ENCODE measurements at regions of chr22 and their contacts with region 1.

Region 1: GRCh38 chr22:36856121-36856791 is 4.5 kb upstream of the NCF4 start:
- DNase-seq: peak; percentile 57 to 79
- ATAC-seq: peak; percentile 91 to 96
- H3K4me3 ChIP-seq: peak overlapping the region; percentile 8; the same call in 1 of the 3 replicates
- H3K27ac ChIP-seq: no peak overlapping the region
- H3K4me1 ChIP-seq: no peaks in the 10 kb centered on the region
- CTCF ChIP-seq: peak; percentile 99
- EP300 ChIP-seq: no peak
- POLR2A ChIP-seq: no peak
- RAD21 ChIP-seq: peak; percentile 68 to 80

Region 2: GRCh38 chr22:36552289-36552688 is 304.0 kb before region 1 on chr22:
- CTCF ChIA-PET with region 1: interaction called, 23 read pairs
- POLR2A ChIA-PET with region 1: no interaction called
- DNase-seq: no peak
- ATAC-seq: no peak
- H3K4me3 ChIP-seq: no peak overlapping the region
- H3K27ac ChIP-seq: no peak overlapping the region
- H3K4me1 ChIP-seq: peaks cover 5% of the 10 kb centered on the region
- CTCF ChIP-seq: no peak
- EP300 ChIP-seq: no peak
- POLR2A ChIP-seq: no peak
- RAD21 ChIP-seq: no peak

Region 3: GRCh38 chr22:36699915-36700314 is 156.3 kb before region 1 on chr22:
- CTCF ChIA-PET with region 1: no interaction called
- POLR2A ChIA-PET with region 1: no interaction called
- DNase-seq: no peak
- ATAC-seq: no peak
- H3K4me3 ChIP-seq: no peak overlapping the region
- H3K27ac ChIP-seq: no peak overlapping the region
- H3K4me1 ChIP-seq: no peaks in the 10 kb centered on the region
- CTCF ChIP-seq: no peak
- EP300 ChIP-seq: no peak
- POLR2A ChIP-seq: no peak
- RAD21 ChIP-seq: no peak

Region 4: DNA sequence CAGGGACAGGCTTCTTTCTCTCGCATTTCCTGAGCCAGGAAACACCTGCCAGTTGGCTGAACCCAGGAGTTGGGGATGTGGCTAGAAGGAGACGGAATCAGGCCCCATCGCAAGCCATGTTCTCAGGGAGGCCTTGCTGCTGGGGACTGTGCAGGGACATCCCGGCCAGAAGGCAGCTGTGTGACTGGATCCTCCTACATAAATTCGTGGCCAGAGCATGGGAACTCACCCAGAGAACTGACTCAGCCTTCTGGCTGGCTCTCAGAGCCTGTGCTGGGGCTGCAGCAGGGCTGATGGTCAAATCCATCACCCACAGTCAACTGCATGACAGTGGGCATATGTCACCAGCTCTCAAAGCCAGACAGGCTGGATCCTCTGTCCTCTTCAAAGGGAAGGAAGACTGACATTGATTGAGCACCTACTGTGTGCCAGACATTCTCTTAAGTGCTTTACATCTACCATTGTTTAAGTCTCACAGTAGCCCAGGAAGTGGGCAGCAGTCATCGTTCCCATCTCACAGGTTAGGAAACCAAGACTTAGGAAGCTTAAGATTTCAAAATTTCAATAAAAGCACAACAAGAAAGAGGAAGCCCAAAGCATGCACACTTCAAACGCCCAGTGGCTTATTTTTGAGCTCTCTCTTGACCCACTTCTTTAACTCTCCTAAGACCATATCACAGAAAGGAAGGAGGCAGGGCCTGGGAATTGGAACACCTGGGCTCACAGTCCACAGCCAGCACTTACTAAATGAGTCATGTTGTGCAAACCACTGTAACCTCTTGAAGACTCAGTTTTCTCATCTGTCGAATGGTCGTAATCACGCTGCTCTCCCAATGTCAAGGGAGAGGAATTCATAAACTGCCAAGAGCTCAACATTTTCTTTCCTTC is 121.8 kb before region 1 on chr22:
- CTCF ChIA-PET with region 1: no interaction called
- POLR2A ChIA-PET with region 1: no interaction called
- DNase-seq: no peak
- ATAC-seq: no peak
- H3K4me3 ChIP-seq: no peak overlapping the region
- H3K27ac ChIP-seq: no peak overlapping the region
- H3K4me1 ChIP-seq: no peaks in the 10 kb centered on the region
- CTCF ChIP-seq: no peak
- EP300 ChIP-seq: no peak
- POLR2A ChIP-seq: no peak
- RAD21 ChIP-seq: no peak

Region 5: GRCh38 chr22:36787204-36787988 is 68.9 kb before region 1 on chr22:
- CTCF ChIA-PET with region 1: interaction called, 35 read pairs
- POLR2A ChIA-PET with region 1: no interaction called
- DNase-seq: no peak
- ATAC-seq: peak in 1 of 2 experiments; percentile 27; a peak in 1 of 6 replicates
- H3K4me3 ChIP-seq: no peak overlapping the region
- H3K27ac ChIP-seq: no peak overlapping the region
- H3K4me1 ChIP-seq: 0 out of 3 replicates have a peak, but pooled peaks cover 6% of the 10 kb centered on the region
- CTCF ChIP-seq: no peak
- EP300 ChIP-seq: no peak
- POLR2A ChIP-seq: no peak
- RAD21 ChIP-seq: no peak

Region 6: DNA sequence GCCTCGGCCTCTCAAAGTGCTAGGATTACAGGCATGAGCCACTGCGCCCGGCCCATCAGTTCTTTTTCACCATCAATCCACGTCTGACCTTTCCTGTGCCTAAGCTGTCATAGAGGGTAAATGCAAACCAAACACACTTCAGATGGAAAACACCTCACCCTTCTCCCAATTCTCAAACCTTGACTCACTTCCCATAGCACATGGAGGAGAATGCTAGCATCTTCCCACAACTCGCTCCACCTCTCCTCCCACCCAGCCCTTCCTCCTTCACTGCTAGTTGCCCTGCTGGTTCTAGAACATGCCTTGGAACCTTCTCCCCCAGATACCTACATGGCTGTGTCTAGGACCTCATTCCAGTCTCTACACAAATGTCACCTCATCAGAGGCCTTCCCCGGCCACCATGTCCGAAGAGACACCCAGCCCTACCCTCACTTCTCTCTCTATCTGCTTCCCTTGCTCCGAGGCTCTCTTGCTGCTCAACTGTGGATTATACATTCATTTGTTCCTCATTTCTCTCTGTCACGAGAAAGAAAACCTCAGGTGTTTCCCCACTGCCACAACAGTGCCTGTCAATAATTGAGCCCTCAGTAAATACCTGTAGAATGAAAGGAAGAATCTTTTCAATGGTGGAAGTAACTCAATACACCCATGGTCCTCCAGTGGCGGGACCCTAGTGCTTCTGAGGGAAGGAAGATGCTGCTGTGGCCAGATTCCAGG is 16.7 kb before region 1 on chr22:
- CTCF ChIA-PET with region 1: interaction called, 13 read pairs
- POLR2A ChIA-PET with region 1: no interaction called
- DNase-seq: no peak
- ATAC-seq: no peak
- H3K4me3 ChIP-seq: no peak overlapping the region
- H3K27ac ChIP-seq: no peak overlapping the region
- H3K4me1 ChIP-seq: no peaks in the 10 kb centered on the region
- CTCF ChIP-seq: no peak
- EP300 ChIP-seq: no peak
- POLR2A ChIP-seq: no peak
- RAD21 ChIP-seq: no peak

Region 7: DNA sequence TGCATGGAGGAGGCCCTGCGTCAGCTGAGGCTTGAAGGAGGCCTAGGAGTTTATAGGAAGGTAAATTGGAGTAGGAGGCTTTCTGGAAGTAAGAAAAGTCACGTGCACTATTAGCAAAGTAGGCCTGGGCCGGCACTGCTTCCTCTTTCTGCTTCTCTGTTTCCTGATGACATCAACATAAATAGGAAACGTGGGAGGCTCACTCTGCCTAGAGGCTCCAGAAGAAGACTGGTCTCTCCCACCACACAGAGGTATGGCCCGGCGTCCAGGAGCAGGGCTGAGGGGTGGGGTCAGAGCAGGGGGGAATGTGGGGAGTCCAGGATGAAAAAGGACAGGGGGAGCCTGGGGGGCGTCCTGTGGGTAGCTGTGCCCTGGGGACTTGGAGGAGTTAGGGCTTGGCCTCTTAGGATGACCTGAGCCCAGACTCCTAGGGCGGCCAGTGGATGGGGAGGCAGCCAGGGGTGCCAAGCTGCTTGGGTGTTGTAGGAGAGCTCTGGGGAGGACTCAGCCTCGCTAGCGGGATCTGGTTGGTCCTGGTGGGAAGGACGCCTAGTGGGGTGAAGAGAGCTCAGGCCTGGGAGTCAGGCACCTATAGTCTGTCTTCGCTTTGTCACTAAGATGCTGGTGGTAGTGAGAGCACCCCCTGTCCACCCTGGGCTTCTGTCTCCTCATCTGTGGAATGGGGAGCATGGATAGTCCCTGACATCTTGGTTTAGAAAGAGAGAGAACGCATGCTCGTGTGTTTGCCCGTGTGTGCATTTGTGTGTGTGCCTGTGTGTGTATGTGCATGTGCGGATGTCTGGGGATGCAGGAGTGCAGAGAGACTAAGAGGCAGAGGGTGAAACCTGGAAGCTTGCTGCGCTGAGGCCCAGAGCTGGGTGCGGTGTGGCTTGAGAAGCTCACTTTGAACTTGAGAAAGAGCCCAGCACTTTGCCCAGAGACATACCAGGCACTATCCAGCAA is 57.5 kb after region 1 on chr22 and contains the start of gene CSF2RB:
- CTCF ChIA-PET with region 1: interaction called, 11 read pairs
- POLR2A ChIA-PET with region 1: no interaction called
- DNase-seq: no peak
- ATAC-seq: no peak
- H3K4me3 ChIP-seq: no peak within 1 kb of the TSS
- H3K27ac ChIP-seq: no peak within 1 kb of the TSS
- H3K4me1 ChIP-seq: no peaks in the 10 kb centered on the region
- CTCF ChIP-seq: no peak
- EP300 ChIP-seq: no peak
- POLR2A ChIP-seq: no peak
- RAD21 ChIP-seq: no peak
- polyA plus RNA-seq, gene CSF2RB: not detected in 2 replicates

Region 8: GRCh38 chr22:36977947-36978660 is 121.8 kb after region 1 on chr22:
- CTCF ChIA-PET with region 1: interaction called, 26 read pairs
- POLR2A ChIA-PET with region 1: no interaction called
- DNase-seq: peak; percentile 82 to 84
- ATAC-seq: peak; percentile 87 to 88
- H3K4me3 ChIP-seq: peak overlapping the region; percentile 46
- H3K27ac ChIP-seq: peak overlapping the region; percentile 63 to 86; a peak in 5 of 6 replicates
- H3K4me1 ChIP-seq: no peaks in the 10 kb centered on the region
- CTCF ChIP-seq: peak; percentile 67
- EP300 ChIP-seq: no peak
- POLR2A ChIP-seq: no peak
- RAD21 ChIP-seq: peak; percentile 78 to 79